Ovary (tissue), 10 donors: ENCODE measurements at regions of chr5 and their contacts with region 1.

Region 1: DNA sequence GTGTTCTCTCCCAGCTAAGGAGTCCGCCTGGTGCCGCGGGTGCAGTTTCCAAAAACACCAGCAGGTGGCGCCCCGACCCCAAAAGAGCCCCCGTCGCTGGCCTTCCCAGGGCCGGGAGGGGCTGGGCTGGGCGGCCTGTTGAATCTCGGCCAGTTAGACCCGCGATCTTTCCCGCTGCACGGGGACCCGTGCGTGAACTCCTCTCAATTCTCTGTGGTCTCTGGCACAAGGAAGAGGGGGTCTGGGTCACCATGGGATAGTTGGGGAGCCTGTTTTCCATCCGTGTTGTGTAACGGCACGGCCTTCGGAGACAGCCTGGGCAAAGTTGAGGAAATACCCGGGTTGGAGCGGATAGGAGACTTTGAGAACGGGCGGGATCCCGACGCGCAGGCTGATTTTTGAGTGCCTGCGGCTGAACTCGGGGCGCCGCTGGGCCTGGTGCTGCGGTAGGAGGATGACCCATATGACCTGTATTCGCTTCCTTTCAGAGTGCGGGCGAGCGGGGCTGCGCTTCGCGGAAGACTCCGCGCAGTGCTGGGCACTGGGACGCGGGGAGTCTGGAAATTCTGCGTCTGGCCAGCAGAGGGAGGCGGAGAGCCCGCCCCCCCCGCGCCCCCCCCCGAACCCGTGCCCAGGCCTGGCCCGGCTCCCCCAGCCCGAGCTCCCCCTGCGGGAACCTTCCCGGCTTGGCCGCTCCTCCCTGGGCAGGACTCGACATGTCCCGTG is 7.9 kb upstream of the PSD2 start:
- DNase-seq: peak; percentile 80 to 96 (median 91)
- H3K4me3 ChIP-seq: peak overlapping the region; percentile 40
- H3K27ac ChIP-seq: peak overlapping the region in 1 of 2 donors; percentile 49
- H3K4me1 ChIP-seq: no peaks in the 10 kb centered on the region
- H3K27me3 ChIP-seq: no peaks in the 10 kb centered on the region
- CTCF ChIP-seq: peak; percentile 87 to 99 (median 98)
- EP300 ChIP-seq: no peak
- POLR2A ChIP-seq: no peak

Region 2: DNA sequence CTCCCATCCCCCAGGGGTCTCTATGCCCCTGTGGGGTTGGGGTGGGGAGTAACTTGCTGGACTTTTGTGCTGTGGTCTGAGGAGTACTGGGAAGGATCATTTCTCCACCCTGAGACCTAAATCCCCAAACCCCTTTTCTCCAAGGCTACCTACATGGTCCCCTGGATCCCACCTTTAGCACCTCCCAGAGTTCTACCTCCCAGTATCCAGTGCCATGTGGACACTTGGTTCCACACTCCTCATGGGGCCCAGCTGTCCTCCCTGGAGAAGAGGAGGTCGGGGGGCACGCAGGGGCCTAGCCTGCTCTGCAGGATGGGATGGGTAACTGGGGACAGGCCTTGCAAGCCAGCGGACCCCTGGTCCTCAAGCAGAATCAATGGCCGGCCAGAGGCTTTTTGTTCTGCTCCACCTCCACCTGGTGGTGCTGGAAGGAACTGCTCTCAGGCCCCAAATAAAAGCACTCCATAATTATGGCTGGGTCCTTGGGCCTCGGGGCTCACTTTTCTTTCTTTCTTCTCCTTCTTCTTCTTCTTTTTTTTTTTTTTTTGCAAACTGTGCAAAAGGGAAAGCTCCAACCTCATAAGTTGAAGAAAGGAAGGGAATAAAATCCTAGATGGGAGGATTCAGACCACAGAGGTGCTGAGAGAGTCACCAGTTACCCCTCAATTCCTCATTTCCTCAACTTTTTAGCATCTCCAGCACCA is 76.3 kb after region 1 on chr5:
- intact Hi-C with region 1: loop called (anchors 2 to 10 kb)
- DNase-seq: peak; percentile 71 to 82 (median 79)
- H3K4me3 ChIP-seq: no peak overlapping the region
- H3K27ac ChIP-seq: peak overlapping the region; percentile 33 to 58
- H3K4me1 ChIP-seq: peaks cover 30% of the 10 kb centered on the region
- H3K27me3 ChIP-seq: no peaks in the 10 kb centered on the region
- CTCF ChIP-seq: peak; percentile 72 to 75 (median 75)
- EP300 ChIP-seq: no peak
- POLR2A ChIP-seq: no peak

Region 3: DNA sequence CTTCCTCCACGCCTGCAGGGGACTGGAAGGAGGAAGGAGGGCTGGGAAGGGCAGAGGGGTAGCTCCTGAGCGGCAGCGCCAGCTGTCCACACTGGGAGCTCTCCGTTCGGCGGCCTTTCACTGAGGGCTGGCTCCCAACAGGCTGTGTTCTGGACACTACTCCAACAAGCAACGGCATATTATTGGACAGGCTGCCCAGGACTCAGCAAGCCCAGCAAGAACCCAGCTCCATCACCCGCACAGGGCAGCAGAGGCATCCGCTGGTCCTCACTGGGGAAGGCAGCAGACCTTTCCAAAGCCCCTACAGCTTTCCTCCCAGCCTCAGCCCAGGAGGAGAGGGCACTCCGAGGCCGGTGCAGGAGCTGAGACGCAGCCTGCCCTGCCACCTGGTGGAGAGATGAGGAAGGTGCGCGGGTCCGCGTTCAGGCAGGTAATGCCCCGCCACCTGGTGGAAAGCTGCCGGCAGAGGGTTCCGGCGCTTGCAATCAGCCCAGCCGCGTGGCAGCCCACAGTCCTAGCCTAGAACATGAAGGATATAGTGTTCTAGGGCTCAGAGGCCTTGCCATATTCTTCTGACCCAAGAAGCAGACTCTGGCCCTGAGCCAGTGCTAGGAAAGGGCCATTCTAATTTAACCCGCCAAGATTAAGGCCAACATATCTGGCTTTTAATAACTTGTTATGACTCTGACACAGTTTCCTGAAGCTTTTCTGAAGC is 181.0 kb after region 1 on chr5:
- intact Hi-C with region 1: loop called (anchors 1 to 2 kb)
- DNase-seq: peak; percentile 85 to 96 (median 92)
- H3K4me3 ChIP-seq: no peak overlapping the region
- H3K27ac ChIP-seq: no peak overlapping the region
- H3K4me1 ChIP-seq: peaks cover 3% of the 10 kb centered on the region
- H3K27me3 ChIP-seq: no peaks in the 10 kb centered on the region
- CTCF ChIP-seq: peak; percentile 96 to 100 (median 100)
- EP300 ChIP-seq: no peak
- POLR2A ChIP-seq: peak; percentile 50

Region 4: GRCh38 chr5:140094889-140095288 is 307.2 kb after region 1 on chr5:
- intact Hi-C with region 1: no loop called
- DNase-seq: no peak
- H3K4me3 ChIP-seq: no peak overlapping the region
- H3K27ac ChIP-seq: no peak overlapping the region
- H3K4me1 ChIP-seq: no peaks in the 10 kb centered on the region
- H3K27me3 ChIP-seq: no peaks in the 10 kb centered on the region
- CTCF ChIP-seq: no peak
- EP300 ChIP-seq: no peak
- POLR2A ChIP-seq: no peak

Region 5: GRCh38 chr5:140157032-140157803 is 369.5 kb after region 1 on chr5:
- intact Hi-C with region 1: loop called (anchors 5 to 10 kb)
- DNase-seq: peak; percentile 79 to 92 (median 91)
- H3K4me3 ChIP-seq: peak overlapping the region; percentile 14
- H3K27ac ChIP-seq: no peak overlapping the region
- H3K4me1 ChIP-seq: no peaks in the 10 kb centered on the region
- H3K27me3 ChIP-seq: no peaks in the 10 kb centered on the region
- CTCF ChIP-seq: peak; percentile 83 to 89 (median 89)
- EP300 ChIP-seq: no peak
- POLR2A ChIP-seq: no peak